ENCODE measurements at regions of chr12 and their contacts with region 1.

Region 1: GRCh38 chr12:111451649-111452129 is 46.0 kb downstream of the SH2B3 start:
- DNase-seq: peak in 2 of 35 experiments; percentile 58 to 78
- ATAC-seq: peak in 3 of 4 experiments; percentile 38 to 66 (median 64)
- H3K4me3 ChIP-seq: no peak overlapping the region
- H3K4me3 Mint-ChIP-seq: no peak overlapping the region
- H3K27ac ChIP-seq: peak overlapping the region; percentile 21
- H3K27ac Mint-ChIP-seq: peak overlapping the region; percentile 25 to 67
- H3K4me1 ChIP-seq: peaks cover 5 to 12% of the 10 kb centered on the region in 2 experiments
- H3K4me1 Mint-ChIP-seq: peaks cover 20 to 59% (median 42%) of the 10 kb centered on the region in 3 donors
- H3K27me3 ChIP-seq: no peaks in the 10 kb centered on the region
- H3K27me3 Mint-ChIP-seq: no peaks in the 10 kb centered on the region

Region 2: GRCh38 chr12:111405149-111405860 is 46.4 kb before region 1 on chr12:
- CTCF ChIA-PET with region 1: interaction called, 138 to 218 read pairs
- POLR2A ChIA-PET with region 1: interaction called in 1 of 2 experiments, 6 read pairs
- DNase-seq: peak; percentile 94 to 100 (median 98)
- ATAC-seq: peak; percentile 77 to 83 (median 78)
- H3K4me3 ChIP-seq: peak overlapping the region; percentile 26 to 65
- H3K4me3 Mint-ChIP-seq: peak overlapping the region; percentile 81 to 85 (median 85)
- H3K27ac ChIP-seq: peak overlapping the region; percentile 70
- H3K27ac Mint-ChIP-seq: peak overlapping the region; percentile 90 to 92
- H3K4me1 ChIP-seq: peaks cover 30 to 68% of the 10 kb centered on the region in 2 experiments
- H3K4me1 Mint-ChIP-seq: peaks cover 58 to 63% (median 59%) of the 10 kb centered on the region in 3 donors
- H3K27me3 ChIP-seq: no peaks in the 10 kb centered on the region
- H3K27me3 Mint-ChIP-seq: no peaks in the 10 kb centered on the region

Region 3: DNA sequence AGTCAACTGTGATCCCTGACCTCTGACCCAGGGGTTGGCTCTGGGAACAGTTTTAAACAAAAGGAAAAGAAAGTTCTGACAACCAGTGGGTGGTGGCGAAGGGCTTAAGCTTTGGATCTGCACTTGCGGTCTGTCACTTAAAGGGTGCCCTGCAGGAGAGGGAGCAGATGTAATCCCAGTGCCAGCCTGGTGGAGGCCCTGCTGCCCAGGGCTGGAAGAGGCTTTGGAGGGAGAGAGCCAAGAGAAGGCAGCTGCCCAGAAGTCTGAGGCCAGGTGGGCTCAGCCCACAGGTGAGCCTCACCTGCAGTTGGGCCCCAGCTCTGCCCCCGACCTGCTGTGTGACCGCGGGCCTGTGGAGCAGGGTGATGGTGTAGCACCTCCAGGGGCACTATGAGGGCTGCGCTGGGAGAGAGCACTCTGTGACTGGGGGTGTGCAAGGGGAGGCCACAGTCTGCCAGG is 26.9 kb before region 1 on chr12:
- CTCF ChIA-PET with region 1: interaction called, 13 to 31 read pairs
- POLR2A ChIA-PET with region 1: no interaction called
- DNase-seq: peak in 3 of 35 experiments; percentile 26 to 46 (median 33)
- ATAC-seq: peak in 2 of 4 experiments; percentile 13 to 43
- H3K4me3 ChIP-seq: no peak overlapping the region
- H3K4me3 Mint-ChIP-seq: peak overlapping the region in 1 of 3 donors; percentile 90
- H3K27ac ChIP-seq: peak overlapping the region; percentile 84
- H3K27ac Mint-ChIP-seq: peak overlapping the region; percentile 87 to 92
- H3K4me1 ChIP-seq: peaks cover 44 to 63% of the 10 kb centered on the region in 2 experiments
- H3K4me1 Mint-ChIP-seq: peaks cover 43 to 71% (median 66%) of the 10 kb centered on the region in 3 donors
- H3K27me3 ChIP-seq: no peaks in the 10 kb centered on the region
- H3K27me3 Mint-ChIP-seq: no peaks in the 10 kb centered on the region

Region 4: GRCh38 chr12:111482462-111482861 is 30.8 kb after region 1 on chr12:
- CTCF ChIA-PET with region 1: interaction called, 6 to 11 read pairs
- POLR2A ChIA-PET with region 1: interaction called in 1 of 2 experiments, 7 read pairs
- DNase-seq: peak in 1 of 35 experiments; percentile 24
- ATAC-seq: peak in 1 of 4 experiments; percentile 29
- H3K4me3 ChIP-seq: no peak overlapping the region
- H3K4me3 Mint-ChIP-seq: no peak overlapping the region
- H3K27ac ChIP-seq: no peak overlapping the region
- H3K27ac Mint-ChIP-seq: no peak overlapping the region
- H3K4me1 ChIP-seq: no peaks in the 10 kb centered on the region
- H3K4me1 Mint-ChIP-seq: no peaks in the 10 kb centered on the region
- H3K27me3 ChIP-seq: no peaks in the 10 kb centered on the region
- H3K27me3 Mint-ChIP-seq: no peaks in the 10 kb centered on the region

Region 5: DNA sequence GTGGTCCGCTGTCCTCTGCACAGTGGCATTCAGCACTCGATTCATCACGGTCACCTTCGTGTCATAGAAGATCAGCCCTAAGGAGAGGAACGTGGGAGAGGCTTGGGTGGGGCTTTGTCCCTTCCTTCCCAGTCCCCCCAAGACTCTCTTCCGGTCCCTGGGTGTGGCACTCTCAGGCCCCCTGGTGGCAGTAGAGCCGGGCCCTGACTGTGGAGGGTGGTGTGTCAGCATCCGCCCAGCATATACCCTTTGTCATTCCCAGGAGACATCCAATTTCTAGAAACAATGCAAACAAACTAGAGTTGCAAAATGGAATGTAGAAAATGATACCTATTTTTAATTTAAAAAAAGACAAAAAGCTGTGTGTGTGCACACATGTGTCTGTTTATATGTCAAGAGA is 718.7 kb after region 1 on chr12:
- CTCF ChIA-PET with region 1: no interaction called
- POLR2A ChIA-PET with region 1: no interaction called
- DNase-seq: peak in 11 of 35 experiments; percentile 5 to 36 (median 13)
- ATAC-seq: peak; percentile 45 to 60 (median 50)
- H3K4me3 ChIP-seq: no peak overlapping the region
- H3K4me3 Mint-ChIP-seq: no peak overlapping the region
- H3K27ac ChIP-seq: no peak overlapping the region
- H3K27ac Mint-ChIP-seq: peak overlapping the region; percentile 44 to 45
- H3K4me1 ChIP-seq: peaks cover 0 to 2% of the 10 kb centered on the region in 2 experiments
- H3K4me1 Mint-ChIP-seq: peaks cover 0 to 6% (median 5%) of the 10 kb centered on the region in 3 donors
- H3K27me3 ChIP-seq: no peaks in the 10 kb centered on the region
- H3K27me3 Mint-ChIP-seq: no peaks in the 10 kb centered on the region

Region 6: GRCh38 chr12:112386726-112387125 is 935.0 kb after region 1 on chr12:
- CTCF ChIA-PET with region 1: no interaction called
- POLR2A ChIA-PET with region 1: interaction called in 1 of 2 experiments, 10 read pairs
- DNase-seq: no peak
- ATAC-seq: no peak
- H3K4me3 ChIP-seq: no peak overlapping the region
- H3K4me3 Mint-ChIP-seq: no peak overlapping the region
- H3K27ac ChIP-seq: no peak overlapping the region
- H3K27ac Mint-ChIP-seq: peak overlapping the region in 1 of 2 donors; percentile 80
- H3K4me1 ChIP-seq: peaks cover 0 to 12% of the 10 kb centered on the region in 2 experiments
- H3K4me1 Mint-ChIP-seq: peaks cover 8 to 13% (median 9%) of the 10 kb centered on the region in 3 donors
- H3K27me3 ChIP-seq: peaks cover 0 to 6% of the 10 kb centered on the region in 2 experiments
- H3K27me3 Mint-ChIP-seq: no peaks in the 10 kb centered on the region

Measured in T-cell (primary cell).